A673 (cell line): ENCODE measurements at regions of chr11 and their contacts with region 1.

Region 1: GRCh38 chr11:88543902-88544655 is 206.5 kb upstream of the CTSC start:
- DNase-seq: peak; percentile 92
- H3K4me3 ChIP-seq: no peak overlapping the region
- H3K27ac ChIP-seq: no peak overlapping the region
- H3K4me1 ChIP-seq: no peaks in the 10 kb centered on the region
- H3K27me3 ChIP-seq: peaks cover 5% of the 10 kb centered on the region
- CTCF ChIP-seq: peak; percentile 96

Region 2: DNA sequence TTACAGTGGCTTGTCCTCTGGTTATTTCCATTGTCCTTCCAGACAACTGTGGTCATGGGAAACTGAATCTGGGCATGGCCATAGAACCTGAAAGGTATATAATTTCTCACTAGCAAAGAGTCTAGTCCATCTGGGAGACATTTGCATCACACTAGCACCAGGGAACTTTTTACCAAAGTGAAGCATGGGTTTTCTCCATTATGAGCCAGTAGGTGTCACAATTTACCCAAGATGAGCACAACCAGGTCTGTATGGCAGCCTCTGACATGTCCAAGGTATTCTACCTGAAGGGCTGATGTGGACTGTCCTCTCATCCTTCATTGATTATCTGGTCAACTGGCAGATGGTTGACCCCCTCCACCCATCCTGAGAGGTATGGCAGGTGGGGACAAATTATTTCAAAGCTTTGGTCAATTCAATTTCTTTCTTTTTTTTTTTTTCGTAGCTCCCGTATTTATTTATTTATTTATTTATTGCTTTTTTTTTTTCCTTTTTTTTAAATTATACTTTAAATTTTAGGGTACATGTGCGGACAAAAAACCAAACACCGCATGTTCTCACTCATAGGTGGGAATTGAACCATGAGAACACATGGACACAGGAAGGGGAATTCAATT is 1080.5 kb before region 1 on chr11:
- CTCF ChIA-PET with region 1: interaction called, 4 read pairs
- POLR2A ChIA-PET with region 1: no interaction called
- intact Hi-C with region 1: loop called (anchors 1 kb)
- DNase-seq: peak; percentile 49
- H3K4me3 ChIP-seq: no peak overlapping the region
- H3K27ac ChIP-seq: no peak overlapping the region
- H3K4me1 ChIP-seq: no peaks in the 10 kb centered on the region
- H3K27me3 ChIP-seq: peaks cover 20% of the 10 kb centered on the region
- CTCF ChIP-seq: peak; percentile 65

Region 3: DNA sequence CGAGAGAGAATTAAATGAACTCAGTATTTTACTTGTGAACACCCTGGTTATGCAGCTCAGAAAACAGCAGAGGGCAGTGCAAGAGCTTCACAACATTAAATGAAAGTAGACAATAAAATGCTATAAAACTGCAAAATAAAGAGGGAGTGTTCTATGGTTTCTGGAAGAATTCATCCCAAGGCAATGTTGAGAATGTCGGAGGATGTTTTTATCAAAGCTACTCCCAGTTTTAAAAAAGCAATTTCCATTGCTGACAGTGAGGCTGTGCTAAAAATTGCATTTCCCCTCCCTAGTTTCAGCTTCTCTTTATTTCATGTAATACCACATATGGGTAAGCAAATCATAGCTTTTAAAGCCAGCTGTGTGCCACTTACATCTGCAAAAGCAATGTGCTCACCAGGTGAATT is 665.7 kb before region 1 on chr11:
- CTCF ChIA-PET with region 1: interaction called, 7 read pairs
- POLR2A ChIA-PET with region 1: no interaction called
- intact Hi-C with region 1: loop called (anchors 1 kb)
- DNase-seq: peak; percentile 58
- H3K4me3 ChIP-seq: no peak overlapping the region
- H3K27ac ChIP-seq: no peak overlapping the region
- H3K4me1 ChIP-seq: no peaks in the 10 kb centered on the region
- H3K27me3 ChIP-seq: peaks cover 9% of the 10 kb centered on the region
- CTCF ChIP-seq: peak; percentile 70

Region 4: DNA sequence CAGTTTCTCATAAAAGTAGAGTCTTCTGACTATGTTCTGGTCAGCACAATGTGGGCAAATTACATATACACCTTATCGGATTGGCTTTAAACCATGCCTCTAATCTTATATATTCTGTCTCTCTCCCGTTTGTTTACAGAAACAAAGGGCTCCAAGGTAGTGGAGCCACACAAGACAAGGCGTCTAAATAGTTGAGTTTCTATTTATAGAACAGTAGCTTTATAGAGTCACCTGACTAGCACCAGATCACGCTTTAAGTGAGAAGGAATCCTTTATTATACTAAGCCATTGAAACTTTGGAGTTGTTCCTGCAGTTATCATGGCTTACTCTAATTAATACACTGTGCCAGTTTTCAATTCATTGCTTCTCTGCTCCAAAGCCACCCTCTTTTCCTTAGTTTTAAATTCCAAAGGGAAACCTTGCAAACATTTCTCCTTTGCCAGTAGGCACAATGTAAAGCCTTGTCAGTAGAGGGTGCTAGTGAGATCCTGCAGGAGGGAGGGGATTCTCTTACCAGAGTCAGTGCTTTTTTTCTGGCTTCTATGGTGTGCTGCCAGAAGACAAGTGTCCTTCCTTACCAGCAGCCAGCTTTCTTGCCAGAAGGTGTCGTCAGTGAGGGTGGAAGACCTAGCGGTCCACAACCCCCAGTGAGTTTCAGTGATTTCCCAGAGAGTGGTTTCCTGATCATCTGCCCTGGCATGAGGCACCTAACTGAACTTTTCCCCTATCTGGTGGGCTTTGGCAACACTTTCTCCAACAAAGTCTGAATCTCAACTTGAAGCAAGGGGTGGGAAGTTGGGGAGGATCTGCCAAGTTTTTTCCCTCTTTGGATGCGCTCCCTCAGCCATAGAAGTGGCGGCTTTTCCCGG is 440.5 kb before region 1 on chr11:
- CTCF ChIA-PET with region 1: interaction called, 4 read pairs
- POLR2A ChIA-PET with region 1: no interaction called
- intact Hi-C with region 1: loop called (anchors 1 kb)
- DNase-seq: peak; percentile 92
- H3K4me3 ChIP-seq: no peak overlapping the region
- H3K27ac ChIP-seq: no peak overlapping the region
- H3K4me1 ChIP-seq: no peaks in the 10 kb centered on the region
- H3K27me3 ChIP-seq: peaks cover 19% of the 10 kb centered on the region
- CTCF ChIP-seq: peak; percentile 94

Region 5: DNA sequence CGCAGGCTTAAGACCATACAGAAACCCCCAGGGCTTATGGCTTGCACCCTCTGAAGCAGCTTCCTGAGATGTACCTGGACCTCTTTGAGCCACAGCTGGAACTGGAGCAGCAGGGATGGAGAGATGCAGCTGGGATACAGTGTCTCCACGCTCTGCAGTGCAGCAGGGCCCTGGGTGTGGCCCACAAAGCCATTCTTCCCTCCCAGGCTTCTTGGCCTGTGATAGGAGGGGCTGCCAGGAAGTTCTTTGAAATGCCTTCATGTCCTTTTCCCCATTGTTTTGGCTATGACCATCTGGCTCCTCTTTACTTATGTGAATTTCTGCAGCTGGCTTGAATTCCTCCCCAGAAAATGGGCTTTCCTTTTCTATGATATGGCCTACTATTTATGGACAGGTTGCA is 331.8 kb before region 1 on chr11:
- CTCF ChIA-PET with region 1: no interaction called
- POLR2A ChIA-PET with region 1: no interaction called
- intact Hi-C with region 1: no loop called
- DNase-seq: no peak
- H3K4me3 ChIP-seq: no peak overlapping the region
- H3K27ac ChIP-seq: no peak overlapping the region
- H3K4me1 ChIP-seq: no peaks in the 10 kb centered on the region
- H3K27me3 ChIP-seq: no peaks in the 10 kb centered on the region
- CTCF ChIP-seq: no peak

Region 6: GRCh38 chr11:88231894-88232482 is 312.1 kb before region 1 on chr11:
- CTCF ChIA-PET with region 1: interaction called, 10 read pairs
- POLR2A ChIA-PET with region 1: no interaction called
- intact Hi-C with region 1: loop called (anchors 2 kb)
- DNase-seq: peak; percentile 66
- H3K4me3 ChIP-seq: no peak overlapping the region
- H3K27ac ChIP-seq: no peak overlapping the region
- H3K4me1 ChIP-seq: no peaks in the 10 kb centered on the region
- H3K27me3 ChIP-seq: no peaks in the 10 kb centered on the region
- CTCF ChIP-seq: peak; percentile 77

Region 7: GRCh38 chr11:88484873-88485621 is 59.0 kb before region 1 on chr11:
- CTCF ChIA-PET with region 1: interaction called, 4 read pairs
- POLR2A ChIA-PET with region 1: no interaction called
- intact Hi-C with region 1: loop called (anchors 2 kb)
- DNase-seq: peak; percentile 68
- H3K4me3 ChIP-seq: no peak overlapping the region
- H3K27ac ChIP-seq: no peak overlapping the region
- H3K4me1 ChIP-seq: no peaks in the 10 kb centered on the region
- H3K27me3 ChIP-seq: no peaks in the 10 kb centered on the region
- CTCF ChIP-seq: peak; percentile 91

Region 8: DNA sequence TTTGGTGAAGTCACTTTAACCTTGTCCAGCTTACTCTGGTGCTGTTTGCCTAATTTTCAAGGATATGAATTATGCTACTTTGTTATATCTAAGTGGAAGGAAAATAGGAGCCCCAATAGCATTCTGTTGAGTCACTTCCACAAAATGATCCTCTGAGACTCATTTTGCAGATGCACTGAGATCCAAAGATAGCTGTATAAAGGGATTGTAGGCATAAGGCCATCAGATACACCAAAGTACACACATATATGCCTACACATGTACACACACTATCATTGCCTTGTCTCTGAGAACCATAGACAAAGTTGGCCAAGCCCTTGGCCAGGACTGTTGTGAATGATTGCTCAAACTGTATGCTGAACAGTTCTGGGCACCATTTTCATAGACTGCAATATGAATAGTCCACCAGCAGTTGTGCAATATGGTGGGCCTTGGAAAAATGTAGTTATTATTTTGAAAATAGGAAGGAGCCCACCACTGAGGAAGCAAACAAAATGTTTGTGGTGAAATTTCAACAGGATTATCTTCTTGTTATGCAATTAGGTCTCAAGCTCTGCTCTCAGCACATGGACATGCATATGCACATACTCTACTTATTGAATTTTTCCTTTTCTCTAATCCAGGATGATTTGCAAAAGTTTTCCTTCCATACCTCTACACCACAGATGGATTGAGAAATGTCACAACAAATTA is 20.6 kb before region 1 on chr11:
- CTCF ChIA-PET with region 1: no interaction called
- POLR2A ChIA-PET with region 1: no interaction called
- intact Hi-C with region 1: no loop called
- DNase-seq: no peak
- H3K4me3 ChIP-seq: no peak overlapping the region
- H3K27ac ChIP-seq: no peak overlapping the region
- H3K4me1 ChIP-seq: no peaks in the 10 kb centered on the region
- H3K27me3 ChIP-seq: no peaks in the 10 kb centered on the region
- CTCF ChIP-seq: no peak